IMR-90 (cell line): ENCODE measurements at regions of chrX and their contacts with region 1.

Region 1: DNA sequence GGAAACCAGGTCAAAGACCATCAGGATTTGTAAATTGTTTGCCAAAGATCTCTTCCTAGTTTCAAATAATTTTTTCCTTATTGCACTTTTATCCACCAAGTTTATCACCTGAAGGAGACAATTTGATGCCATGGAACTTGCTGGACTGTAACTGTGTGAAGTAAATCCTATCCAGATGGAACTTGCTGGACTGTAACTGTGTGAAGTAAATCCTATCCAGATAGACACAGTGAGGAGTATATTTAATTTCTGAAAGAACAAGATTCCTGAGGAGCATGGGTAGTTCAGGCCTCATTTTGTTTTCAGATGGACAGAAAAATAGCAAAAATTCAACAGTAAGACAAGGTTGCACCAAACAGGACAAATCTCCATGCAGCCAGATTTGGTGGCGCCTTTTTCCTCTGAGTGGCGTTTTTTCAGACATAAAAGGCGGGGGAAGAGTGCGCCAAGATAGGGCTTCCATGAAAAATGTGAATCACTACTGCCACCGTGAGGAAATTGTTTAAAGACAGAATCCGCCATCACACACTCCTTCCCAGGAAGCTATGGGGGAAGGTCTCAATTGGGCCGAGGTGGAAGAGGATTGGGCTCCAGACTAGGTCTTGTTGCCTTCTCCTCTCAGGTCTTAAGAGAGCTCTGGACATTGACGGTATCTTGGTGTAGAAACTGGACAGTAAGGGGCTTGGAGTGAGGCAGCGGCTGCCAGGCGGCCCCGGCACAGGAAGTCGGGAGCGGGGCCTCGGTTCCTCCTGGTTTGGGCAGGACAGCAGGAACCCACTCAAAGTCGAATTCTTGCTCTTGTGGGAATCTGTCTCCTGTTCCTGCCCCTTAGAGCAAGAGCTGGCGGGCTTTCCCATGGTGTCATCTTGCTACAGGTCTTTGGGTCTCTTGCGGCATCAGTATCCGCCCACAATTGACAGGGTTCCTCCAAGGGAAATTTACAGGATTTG is 234.7 kb downstream of the OR13H1 start:
- DNase-seq: peak; percentile 76
- ATAC-seq: peak; percentile 89
- H3K4me3 ChIP-seq: peak overlapping the region; percentile 85
- H3K27ac ChIP-seq: peak overlapping the region; percentile 94; the same call in 1 of the 2 replicates
- H3K4me1 ChIP-seq: 0 out of 2 replicates have a peak, but pooled peaks cover 2% of the 10 kb centered on the region
- H3K27me3 ChIP-seq: peaks cover 2% of the 10 kb centered on the region; the same call in 1 of the 2 replicates
- CTCF ChIP-seq: peak; percentile 62
- POLR2A ChIP-seq: no peak
- RAD21 ChIP-seq: peak; percentile 65

Region 2: DNA sequence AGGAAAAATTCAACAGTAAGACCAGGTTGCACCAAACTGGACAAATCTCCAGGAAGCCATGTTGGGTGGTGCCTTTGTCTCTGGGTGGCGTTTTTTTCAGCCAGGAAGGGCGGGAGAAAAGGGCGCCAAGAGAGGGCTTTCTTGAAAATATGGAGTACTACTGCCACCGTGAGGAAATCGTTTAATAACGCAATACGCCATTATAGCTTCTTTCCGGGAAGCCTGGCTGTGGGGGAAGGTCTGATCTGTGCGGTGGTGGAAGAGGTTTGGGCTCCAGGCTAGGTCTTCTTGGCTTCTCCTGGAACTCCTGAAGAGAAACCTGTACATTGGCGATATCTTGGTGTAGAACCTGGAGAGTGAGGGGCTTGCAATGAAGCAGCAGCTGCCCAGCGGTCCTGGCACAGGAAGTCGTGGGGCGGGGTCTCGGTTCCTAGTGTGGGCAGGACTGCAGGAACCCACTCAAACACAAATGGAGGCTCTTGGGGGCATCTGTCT is 32.0 kb before region 1 on chrX:
- CTCF ChIA-PET with region 1: no interaction called
- POLR2A ChIA-PET with region 1: no interaction called
- dilution Hi-C with region 1: no loop called
- in situ Hi-C with region 1: no loop called
- intact Hi-C with region 1: loop called (anchors 1 kb)
- DNase-seq: peak; percentile 86
- ATAC-seq: peak; percentile 73
- H3K4me3 ChIP-seq: peak overlapping the region; percentile 60
- H3K27ac ChIP-seq: peak overlapping the region; percentile 95
- H3K4me1 ChIP-seq: no peaks in the 10 kb centered on the region
- H3K27me3 ChIP-seq: no peaks in the 10 kb centered on the region
- CTCF ChIP-seq: peak; percentile 64
- POLR2A ChIP-seq: no peak
- RAD21 ChIP-seq: peak; percentile 69